ENCODE measurements at regions of chr16 and their contacts with region 1.

Region 1: GRCh38 chr16:69565671-69566239 is at the start of gene NFAT5:
- DNase-seq: peak; percentile 90 to 95 (median 90)
- ATAC-seq: peak; percentile 84 to 94 (median 90)
- H3K4me3 ChIP-seq: peak within 1 kb of the TSS; percentile 66 to 98 (median 94)
- H3K27ac ChIP-seq: peak within 1 kb of the TSS; percentile 88 to 100 (median 98)
- H3K4me1 ChIP-seq: peaks cover 0 to 55% (median 27%) of the 10 kb centered on the region in 12 donors
- H3K27me3 ChIP-seq: no peaks in the 10 kb centered on the region
- CTCF ChIP-seq: peak in 5 of 12 donors; percentile 17 to 33 (median 25)
- POLR2A ChIP-seq: peak in 1 of 2 donors; percentile 83
- total RNA-seq, gene NFAT5: 13.6 to 30.5 (median 23.9) TPM

Region 2: DNA sequence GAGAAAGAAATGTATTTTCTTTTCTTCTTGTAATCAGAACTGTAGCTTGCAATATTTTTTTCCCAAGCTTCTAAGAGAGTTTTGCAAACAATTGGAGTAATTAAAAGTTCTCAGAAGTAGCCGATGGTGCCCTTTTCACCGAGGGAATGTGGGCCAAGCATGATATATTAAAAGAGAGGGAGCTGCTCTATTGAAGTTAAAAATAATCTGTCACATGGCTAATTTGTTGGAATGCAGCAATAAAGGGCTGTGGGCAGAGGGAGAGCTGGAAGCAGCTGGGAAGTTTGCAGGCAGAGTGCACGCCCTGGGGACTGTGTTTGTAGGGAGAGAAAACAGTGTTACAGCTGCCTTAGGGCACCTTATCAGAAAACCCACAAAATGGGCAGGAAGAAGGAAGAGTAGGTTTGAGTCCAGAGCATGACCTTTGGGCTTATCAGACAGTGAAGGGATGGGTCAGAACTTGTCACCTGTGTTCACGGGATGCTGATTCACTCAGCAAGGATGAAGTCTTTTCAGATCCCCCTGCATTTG is 161.4 kb before region 1 on chr16:
- intact Hi-C with region 1: loop called in 7 of 10 experiments (anchors 2 to 5 kb)
- DNase-seq: peak in 2 of 5 donors; percentile 35 to 45
- ATAC-seq: peak; percentile 71 to 88 (median 78)
- H3K4me3 ChIP-seq: peak overlapping the region in 2 of 12 donors; percentile 8 to 22
- H3K27ac ChIP-seq: peak overlapping the region; percentile 45 to 86 (median 76)
- H3K4me1 ChIP-seq: peaks cover 0 to 36% (median 12%) of the 10 kb centered on the region in 12 donors
- H3K27me3 ChIP-seq: no peaks in the 10 kb centered on the region
- CTCF ChIP-seq: no peak
- POLR2A ChIP-seq: no peak

Region 3: DNA sequence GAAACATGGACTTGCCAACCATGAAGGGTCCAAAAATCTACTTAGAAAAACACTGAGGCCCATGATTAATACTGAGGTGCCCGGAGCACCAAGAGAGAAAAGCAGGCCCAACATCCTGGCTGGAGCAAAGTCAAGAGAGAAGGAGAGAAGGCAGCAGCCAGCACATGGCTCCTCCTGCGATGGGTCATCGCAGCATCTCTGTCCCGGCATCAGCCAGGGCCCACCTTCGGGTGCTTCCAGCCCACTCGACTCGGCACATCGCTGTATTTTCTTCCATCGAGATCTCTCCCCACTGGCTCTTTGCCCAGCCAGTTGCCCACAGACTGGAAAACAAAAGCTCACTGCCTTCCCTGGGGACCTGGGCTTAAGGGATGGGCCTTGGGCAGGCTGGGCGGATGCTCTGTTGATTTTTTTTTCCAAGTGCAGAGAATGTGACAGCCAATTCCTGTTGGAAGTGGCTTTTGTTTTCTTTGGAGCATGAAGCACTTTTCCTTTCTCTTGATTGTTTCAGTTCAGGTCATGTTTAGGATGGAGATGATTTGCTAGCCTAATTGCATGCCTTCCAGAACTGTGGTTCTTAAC is 83.3 kb before region 1 on chr16:
- intact Hi-C with region 1: loop called in 4 of 10 experiments (anchors 1 to 10 kb)
- DNase-seq: peak; percentile 80 to 87 (median 83)
- ATAC-seq: peak; percentile 67 to 91 (median 82)
- H3K4me3 ChIP-seq: peak overlapping the region in 9 of 12 donors; percentile 3 to 42 (median 30)
- H3K27ac ChIP-seq: peak overlapping the region; percentile 68 to 94 (median 90)
- H3K4me1 ChIP-seq: peaks cover 0 to 29% (median 12%) of the 10 kb centered on the region in 12 donors
- H3K27me3 ChIP-seq: peaks cover 0 to 27% (median 0%) of the 10 kb centered on the region in 9 donors
- CTCF ChIP-seq: no peak
- POLR2A ChIP-seq: no peak

Region 4: GRCh38 chr16:69618307-69618706 is 52.6 kb after region 1 on chr16:
- intact Hi-C with region 1: loop called in 1 of 10 experiments (anchors 5 kb)
- DNase-seq: no peak
- ATAC-seq: peak; percentile 59 to 75 (median 74)
- H3K4me3 ChIP-seq: no peak overlapping the region
- H3K27ac ChIP-seq: peak overlapping the region in 11 of 12 donors; percentile 17 to 75 (median 59)
- H3K4me1 ChIP-seq: peaks cover 0 to 69% (median 36%) of the 10 kb centered on the region in 12 donors
- H3K27me3 ChIP-seq: no peaks in the 10 kb centered on the region
- CTCF ChIP-seq: no peak
- POLR2A ChIP-seq: no peak

Region 5: GRCh38 chr16:69754469-69755310 is 188.9 kb after region 1 on chr16 and contains the start of gene NOB1:
- intact Hi-C with region 1: loop called in 1 of 10 experiments (anchors 10 kb)
- DNase-seq: peak; percentile 94 to 99 (median 97)
- ATAC-seq: peak; percentile 97 to 99 (median 98)
- H3K4me3 ChIP-seq: peak within 1 kb of the TSS; percentile 67 to 97 (median 82)
- H3K27ac ChIP-seq: peak within 1 kb of the TSS in 11 of 12 donors; percentile 43 to 82 (median 76)
- H3K4me1 ChIP-seq: peaks cover 0 to 25% (median 15%) of the 10 kb centered on the region in 12 donors
- H3K27me3 ChIP-seq: no peaks in the 10 kb centered on the region
- CTCF ChIP-seq: peak; percentile 96 to 100 (median 99)
- POLR2A ChIP-seq: peak in 1 of 2 donors; percentile 68
- total RNA-seq, gene NOB1: 10.9 to 26.0 (median 16.8) TPM